HepG2 (cell line): ENCODE measurements at regions of chr1 and their contacts with region 1.

Region 1: DNA sequence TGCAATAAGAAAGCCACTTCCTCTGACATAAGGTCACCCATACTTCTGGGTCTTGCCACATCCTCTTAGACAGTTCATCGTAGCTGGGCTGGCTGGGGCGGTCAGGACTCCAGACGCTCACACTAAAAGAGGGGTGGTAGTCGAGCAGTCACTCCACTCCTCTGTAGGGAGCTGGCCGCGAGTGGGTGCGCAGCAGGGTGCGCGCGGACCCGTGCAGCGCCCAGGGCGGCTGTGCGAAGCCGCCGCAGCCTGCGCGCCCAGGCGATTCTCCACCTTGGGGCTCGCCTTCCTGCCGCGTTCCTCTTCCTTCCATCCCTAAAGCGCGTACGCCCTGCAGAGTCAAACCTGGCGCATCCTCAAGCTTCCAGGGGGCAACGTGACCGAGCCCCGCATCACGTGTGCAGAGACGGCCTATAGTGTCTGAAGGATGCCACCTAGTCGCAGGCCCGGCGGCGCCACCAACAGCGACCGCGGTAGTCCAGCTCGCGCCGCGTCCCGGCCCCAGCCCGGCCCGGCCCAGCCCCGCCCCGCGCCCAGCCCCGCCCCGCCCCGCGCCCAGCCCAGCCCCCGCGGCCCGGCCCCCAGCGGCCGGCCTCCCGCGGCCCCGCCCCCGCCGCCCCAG is 360 bp upstream of the PRDX6 start:
- DNase-seq: peak; percentile 93
- ATAC-seq: peak; percentile 87
- H3K4me3 ChIP-seq: peak overlapping the region; percentile 75 to 96 (median 91)
- H3K27ac ChIP-seq: peak overlapping the region; percentile 87
- H3K4me1 ChIP-seq: peaks cover 60% of the 10 kb centered on the region
- H3K27me3 ChIP-seq: no peaks in the 10 kb centered on the region; a peak in 1 of 5 replicates
- CTCF ChIP-seq: peak; percentile 51
- EP300 ChIP-seq: no peak
- POLR2A ChIP-seq: peak in 1 of 2 experiments; percentile 78; a peak in 3 of 4 replicates
- RAD21 ChIP-seq: no peak

Region 2: DNA sequence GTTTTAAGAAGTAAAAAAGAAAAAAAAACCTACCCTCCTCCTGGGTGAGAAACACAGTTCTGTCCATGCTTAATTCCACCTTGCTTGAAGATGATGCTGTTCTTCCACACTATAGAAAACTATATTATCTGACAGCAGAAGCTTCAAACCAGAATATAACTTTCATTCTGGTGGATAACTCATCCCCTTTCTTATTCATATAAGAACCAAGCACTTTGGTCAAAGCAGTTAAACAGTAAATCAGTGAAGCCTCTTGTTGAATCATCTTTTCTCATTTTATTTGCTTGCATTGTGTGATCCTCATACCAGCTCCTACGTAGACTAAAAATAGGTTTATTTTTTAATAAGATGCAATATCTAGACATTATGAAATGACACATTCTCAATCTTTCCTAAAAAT is 36.3 kb before region 1 on chr1:
- CTCF ChIA-PET with region 1: no interaction called
- POLR2A ChIA-PET with region 1: interaction called, 8 read pairs
- in situ Hi-C with region 1: no loop called
- intact Hi-C with region 1: loop called (anchors 2 kb)
- DNase-seq: no peak
- ATAC-seq: no peak
- H3K4me3 ChIP-seq: no peak overlapping the region
- H3K27ac ChIP-seq: no peak overlapping the region
- H3K4me1 ChIP-seq: peaks cover 22% of the 10 kb centered on the region
- H3K27me3 ChIP-seq: no peaks in the 10 kb centered on the region
- CTCF ChIP-seq: no peak
- EP300 ChIP-seq: no peak
- POLR2A ChIP-seq: no peak
- RAD21 ChIP-seq: no peak

Region 3: DNA sequence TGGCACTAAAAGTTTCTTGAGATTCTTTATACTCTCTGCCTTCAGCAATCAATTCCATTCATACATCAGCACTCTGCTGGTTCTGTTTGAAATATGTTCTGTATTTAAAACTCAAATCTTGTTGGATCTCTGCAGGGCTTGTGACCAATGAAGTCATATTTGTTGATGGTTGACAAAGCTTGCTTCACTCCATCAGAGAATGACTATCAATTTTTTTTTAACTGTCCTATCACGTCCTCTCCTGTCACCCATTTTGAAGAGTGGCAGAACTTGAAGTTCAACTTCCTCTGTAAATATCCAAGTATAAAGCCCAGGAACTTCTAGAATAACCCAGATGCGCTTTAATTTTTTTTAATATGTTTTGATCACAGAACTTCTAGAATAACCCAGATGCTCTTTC is 11.2 kb after region 1 on chr1:
- CTCF ChIA-PET with region 1: no interaction called
- POLR2A ChIA-PET with region 1: interaction called, 18 read pairs
- in situ Hi-C with region 1: no loop called
- intact Hi-C with region 1: no loop called
- DNase-seq: no peak
- ATAC-seq: no peak
- H3K4me3 ChIP-seq: no peak overlapping the region
- H3K27ac ChIP-seq: no peak overlapping the region
- H3K4me1 ChIP-seq: no peaks in the 10 kb centered on the region
- H3K27me3 ChIP-seq: no peaks in the 10 kb centered on the region
- CTCF ChIP-seq: no peak
- EP300 ChIP-seq: no peak
- POLR2A ChIP-seq: no peak
- RAD21 ChIP-seq: no peak

Region 4: GRCh38 chr1:173714759-173715537 is 238.2 kb after region 1 on chr1 and contains the start of gene KLHL20:
- CTCF ChIA-PET with region 1: no interaction called
- POLR2A ChIA-PET with region 1: interaction called, 19 read pairs
- in situ Hi-C with region 1: no loop called
- intact Hi-C with region 1: no loop called
- DNase-seq: peak; percentile 89
- ATAC-seq: peak; percentile 98
- H3K4me3 ChIP-seq: peak within 1 kb of the TSS; percentile 74 to 97 (median 84)
- H3K27ac ChIP-seq: peak within 1 kb of the TSS; percentile 74
- H3K4me1 ChIP-seq: peaks cover 31% of the 10 kb centered on the region
- H3K27me3 ChIP-seq: peaks cover 0 to 4% of the 10 kb centered on the region in 2 experiments; a peak in 2 of 5 replicates
- CTCF ChIP-seq: peak; percentile 41
- EP300 ChIP-seq: peak in 1 of 2 experiments; percentile 59; a peak in 2 of 4 replicates
- POLR2A ChIP-seq: peak; percentile 74 to 81
- RAD21 ChIP-seq: no peak; the same call in 1 of the 2 replicates
- total RNA-seq, gene KLHL20: 14.3 and 18.8 TPM in 2 replicates